ENCODE measurements at regions of chr1 and their contacts with region 1.

Region 1: DNA sequence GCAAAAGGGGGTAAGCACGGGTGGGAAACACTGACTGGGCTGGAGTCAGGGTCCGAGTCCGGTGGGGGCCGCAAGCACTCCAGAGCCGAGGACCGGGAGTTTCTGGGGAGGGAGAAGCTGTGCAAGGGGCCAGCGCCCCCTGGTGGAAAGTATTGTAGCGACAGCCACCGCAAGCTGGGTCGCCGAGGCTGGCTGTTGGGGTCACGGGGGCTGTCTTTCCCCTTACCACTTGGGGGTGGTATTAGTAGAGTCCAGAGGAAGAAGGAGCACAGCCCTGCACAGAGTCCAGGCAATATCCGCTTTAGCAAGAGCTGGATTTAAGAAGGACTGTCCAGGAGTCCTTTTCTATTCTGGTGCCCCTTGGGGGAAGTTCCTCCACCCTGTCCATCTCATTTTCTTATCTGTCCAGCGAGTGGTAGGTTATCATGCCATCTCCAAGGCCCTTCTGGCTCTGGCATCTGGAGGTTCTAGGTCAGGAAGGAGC is 17.9 kb upstream of the ETV3 start:
- DNase-seq: peak; percentile 83
- H3K4me3 Mint-ChIP-seq: no peak overlapping the region
- H3K27ac Mint-ChIP-seq: no peak overlapping the region
- H3K4me1 Mint-ChIP-seq: peaks cover 16% of the 10 kb centered on the region
- H3K27me3 Mint-ChIP-seq: peaks cover 11% of the 10 kb centered on the region

Region 2: DNA sequence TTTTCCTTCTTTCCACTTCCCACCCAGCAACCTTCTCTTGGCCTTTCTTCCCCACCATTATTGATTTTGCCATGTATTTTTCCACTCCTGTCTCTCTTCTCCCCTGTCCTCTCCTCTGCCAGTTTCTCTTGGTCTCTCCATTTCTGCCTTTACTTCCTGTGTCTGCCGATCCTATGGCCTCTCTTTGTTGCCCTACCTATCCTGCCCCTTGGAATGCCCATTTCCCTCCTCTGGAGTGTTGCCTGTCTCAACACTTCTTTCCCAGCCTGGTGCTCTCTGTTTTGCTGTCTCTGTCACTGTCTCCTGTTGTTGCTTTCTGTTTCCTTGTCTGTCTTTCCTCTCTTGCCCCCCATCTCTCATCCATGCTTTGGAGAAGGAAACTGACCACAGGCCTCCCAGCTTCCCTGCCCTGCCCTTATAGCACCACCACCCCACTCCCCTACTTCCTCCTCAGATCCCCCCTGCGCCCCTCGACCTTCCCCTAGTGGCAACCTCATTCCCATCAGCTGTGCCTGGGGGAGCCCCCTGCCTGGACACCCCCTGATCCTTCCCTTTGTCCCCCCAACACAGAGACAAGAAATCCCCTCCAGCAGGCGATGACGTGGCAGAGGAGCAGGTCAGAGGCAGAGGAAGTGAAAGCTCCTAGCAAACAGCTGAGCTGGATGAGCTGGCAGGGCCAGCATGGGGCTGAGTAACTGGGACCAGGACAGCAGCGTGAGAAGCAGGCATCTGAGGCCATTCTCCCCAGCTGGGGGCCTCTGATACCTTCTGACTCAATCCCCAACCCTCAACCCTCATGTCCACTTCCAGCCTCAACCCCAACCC is 49.9 kb before region 1 on chr1:
- CTCF ChIA-PET with region 1: interaction called, 22 read pairs
- POLR2A ChIA-PET with region 1: no interaction called
- intact Hi-C with region 1: no loop called
- DNase-seq: peak; percentile 73
- H3K4me3 Mint-ChIP-seq: no peak overlapping the region
- H3K27ac Mint-ChIP-seq: no peak overlapping the region
- H3K4me1 Mint-ChIP-seq: peaks cover 11% of the 10 kb centered on the region
- H3K27me3 Mint-ChIP-seq: peaks cover 26% of the 10 kb centered on the region

Region 3: DNA sequence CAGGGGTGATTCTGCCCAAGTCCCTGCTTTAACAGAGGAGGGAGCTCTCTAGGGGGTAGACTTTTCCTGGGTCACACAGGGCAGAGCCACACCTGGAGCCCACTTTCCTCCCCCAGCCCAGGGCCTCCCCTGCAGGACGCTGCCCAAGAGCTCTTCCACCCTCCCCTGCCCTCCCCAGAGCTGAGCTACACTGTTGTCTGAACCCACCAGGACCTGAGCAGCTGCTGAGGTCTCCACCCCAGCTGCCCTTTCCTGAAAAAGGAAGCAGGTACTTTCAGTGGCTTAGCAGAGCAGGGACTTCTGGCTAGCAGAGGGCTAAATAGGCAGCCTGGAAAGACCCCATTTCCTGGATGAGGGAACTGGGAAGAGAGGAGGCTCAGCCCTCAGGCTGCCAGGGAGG is 151.4 kb after region 1 on chr1:
- CTCF ChIA-PET with region 1: no interaction called
- POLR2A ChIA-PET with region 1: no interaction called
- intact Hi-C with region 1: no loop called
- DNase-seq: no peak
- H3K4me3 Mint-ChIP-seq: no peak overlapping the region
- H3K27ac Mint-ChIP-seq: no peak overlapping the region
- H3K4me1 Mint-ChIP-seq: no peaks in the 10 kb centered on the region
- H3K27me3 Mint-ChIP-seq: peaks cover 17% of the 10 kb centered on the region

Measured in activated CD4-positive, alpha-beta memory T cell treated with anti-CD3 and anti-CD28 coated beads for 36 hours (primary cell).